IMR-90 (cell line): ENCODE measurements at regions of chr10 and their contacts with region 1.

Region 1: DNA sequence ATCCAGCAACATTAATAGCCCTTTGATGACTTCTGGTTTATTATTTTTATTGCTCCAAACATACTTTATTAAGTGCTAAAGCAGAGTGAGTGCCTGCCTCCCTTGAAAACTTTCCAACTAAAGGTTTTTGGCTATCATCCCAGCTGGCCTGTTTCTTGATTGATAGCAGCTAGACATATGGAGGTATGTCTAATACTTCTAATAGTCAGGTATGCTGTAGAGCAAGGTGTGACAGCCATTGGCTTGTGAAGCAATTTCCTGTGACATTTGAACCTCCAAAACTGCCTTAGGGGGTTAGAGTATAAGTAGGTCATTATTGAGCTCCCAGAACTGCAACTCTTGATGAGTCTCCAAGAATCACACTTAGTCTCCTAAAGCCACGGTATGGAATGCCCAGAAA is 55.8 kb downstream of the LOXL4 start:
- DNase-seq: no peak
- ATAC-seq: no peak
- H3K4me3 ChIP-seq: no peak overlapping the region
- H3K27ac ChIP-seq: no peak overlapping the region
- H3K4me1 ChIP-seq: no peaks in the 10 kb centered on the region
- H3K27me3 ChIP-seq: no peaks in the 10 kb centered on the region
- CTCF ChIP-seq: no peak
- POLR2A ChIP-seq: no peak
- RAD21 ChIP-seq: no peak

Region 2: DNA sequence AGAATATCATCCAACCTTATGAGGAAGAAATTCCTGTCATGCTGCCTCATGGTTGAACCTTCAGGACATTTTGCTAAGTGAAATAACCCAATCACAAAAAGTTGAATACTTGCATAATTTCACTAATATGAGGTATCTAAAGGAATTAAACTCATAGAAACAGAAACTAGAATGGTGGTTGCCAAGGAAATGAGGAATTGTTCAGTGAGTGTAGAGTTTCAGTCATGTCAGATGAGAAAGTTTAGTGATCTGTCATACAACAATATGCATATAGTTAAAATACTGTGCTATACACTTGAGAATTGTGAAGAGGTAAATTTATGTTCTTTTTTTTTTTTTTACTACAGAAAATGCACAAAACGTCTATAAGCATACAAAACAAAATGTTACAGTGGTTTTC is 17.1 kb before region 1 on chr10:
- CTCF ChIA-PET with region 1: interaction called, 10 read pairs
- POLR2A ChIA-PET with region 1: no interaction called
- dilution Hi-C with region 1: no loop called
- in situ Hi-C with region 1: no loop called
- intact Hi-C with region 1: no loop called
- DNase-seq: no peak
- ATAC-seq: no peak
- H3K4me3 ChIP-seq: no peak overlapping the region
- H3K27ac ChIP-seq: no peak overlapping the region
- H3K4me1 ChIP-seq: no peaks in the 10 kb centered on the region
- H3K27me3 ChIP-seq: no peaks in the 10 kb centered on the region
- CTCF ChIP-seq: no peak
- POLR2A ChIP-seq: no peak
- RAD21 ChIP-seq: no peak